A549 (cell line): ENCODE measurements at regions of chr7 and their contacts with region 1.

Region 1: DNA sequence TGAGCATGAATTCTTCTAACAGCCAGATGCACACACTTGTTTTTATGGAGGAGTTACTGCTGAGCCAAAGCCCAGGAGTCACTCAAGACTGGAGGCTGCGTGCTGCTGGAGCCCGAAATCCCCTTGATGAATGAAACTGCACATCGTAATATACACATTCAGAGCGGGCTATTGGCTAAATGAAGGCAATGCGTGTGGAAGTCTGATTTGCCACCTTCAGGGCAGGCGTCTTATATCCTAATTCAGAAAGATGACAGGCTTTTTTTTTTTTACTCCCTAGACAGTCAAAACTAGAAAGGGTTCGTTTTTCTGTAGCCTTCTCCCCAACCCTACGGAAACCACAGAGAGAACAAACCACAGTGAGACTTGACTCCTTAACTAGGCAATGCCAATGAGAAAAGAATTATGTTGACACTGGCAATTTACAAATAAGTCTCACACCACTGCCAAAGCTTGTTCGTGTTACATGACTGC is 227.2 kb upstream of the KLF14 start:
- DNase-seq: peak in 1 of 2 experiments; percentile 82
- ATAC-seq: peak; percentile 69 to 79
- H3K4me3 ChIP-seq: peak overlapping the region; percentile 44
- H3K27ac ChIP-seq: peak overlapping the region; percentile 94 to 96
- H3K4me1 ChIP-seq: peaks cover 76% of the 10 kb centered on the region
- CTCF ChIP-seq: no peak
- EP300 ChIP-seq: no peak
- POLR2A ChIP-seq: 0 out of 2 replicates have a peak, but pooled peaks have one; percentile 18
- RAD21 ChIP-seq: no peak

Region 2: GRCh38 chr7:130822642-130823041 is 138.5 kb before region 1 on chr7:
- CTCF ChIA-PET with region 1: no interaction called
- POLR2A ChIA-PET with region 1: no interaction called
- DNase-seq: no peak
- ATAC-seq: no peak
- H3K4me3 ChIP-seq: no peak overlapping the region
- H3K27ac ChIP-seq: no peak overlapping the region
- H3K4me1 ChIP-seq: no peaks in the 10 kb centered on the region
- CTCF ChIP-seq: no peak
- EP300 ChIP-seq: no peak
- POLR2A ChIP-seq: no peak
- RAD21 ChIP-seq: no peak

Region 3: DNA sequence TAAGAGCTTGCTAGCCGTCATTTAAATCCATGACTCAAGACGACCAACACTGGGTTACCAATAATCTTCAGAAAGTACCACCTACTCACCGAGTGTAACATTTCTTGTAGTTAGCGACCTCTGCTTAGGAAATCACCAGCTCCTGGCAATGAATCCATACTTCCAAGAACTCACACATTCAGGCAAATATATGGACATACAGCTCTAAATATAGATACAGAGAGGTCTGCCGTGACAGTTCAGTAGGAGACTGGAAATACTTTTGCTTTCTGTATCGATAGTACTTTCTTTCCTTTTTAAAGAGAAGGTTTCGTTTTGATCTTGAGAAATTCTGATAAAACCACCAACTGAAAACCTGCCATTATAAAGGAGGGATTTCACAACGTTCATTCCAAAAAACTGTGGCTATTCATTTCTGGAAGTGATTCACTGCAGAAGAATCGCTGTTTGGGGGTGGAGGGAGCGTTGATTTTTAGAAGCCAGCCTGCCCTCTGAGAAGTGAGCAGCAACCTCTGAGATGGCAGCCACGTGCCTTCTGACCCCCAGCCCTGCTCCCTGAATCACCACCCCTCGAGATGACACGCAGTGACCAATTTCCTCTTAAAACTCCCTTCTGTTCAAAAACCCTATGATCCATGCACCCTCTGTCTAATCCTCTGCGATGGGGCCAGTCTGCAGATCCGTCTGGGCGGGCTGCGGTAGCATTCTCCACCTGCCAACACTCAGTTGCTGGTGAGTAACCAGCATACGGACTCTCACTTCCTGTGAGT is 48.1 kb before region 1 on chr7:
- CTCF ChIA-PET with region 1: interaction called, 13 read pairs
- POLR2A ChIA-PET with region 1: interaction called, 14 read pairs
- DNase-seq: peak in 1 of 2 experiments; percentile 91
- ATAC-seq: peak; percentile 75 to 78
- H3K4me3 ChIP-seq: peak overlapping the region; percentile 62
- H3K27ac ChIP-seq: peak overlapping the region; percentile 85 to 93
- H3K4me1 ChIP-seq: peaks cover 61% of the 10 kb centered on the region
- CTCF ChIP-seq: no peak
- EP300 ChIP-seq: peak; percentile 80 to 91; a peak in 4 of 5 replicates
- POLR2A ChIP-seq: peak; percentile 36; the same call in 1 of the 2 replicates
- RAD21 ChIP-seq: peak in 1 of 2 experiments; percentile 34; a peak in 2 of 5 replicates

Region 4: GRCh38 chr7:130929896-130930659 is 31.1 kb before region 1 on chr7:
- CTCF ChIA-PET with region 1: interaction called, 11 read pairs
- POLR2A ChIA-PET with region 1: no interaction called
- DNase-seq: peak in 1 of 2 experiments; percentile 77
- ATAC-seq: peak; percentile 50 to 56
- H3K4me3 ChIP-seq: no peak overlapping the region
- H3K27ac ChIP-seq: peak overlapping the region; percentile 75 to 85
- H3K4me1 ChIP-seq: peaks cover 84% of the 10 kb centered on the region
- CTCF ChIP-seq: no peak
- EP300 ChIP-seq: peak in 1 of 2 experiments; percentile 20; a peak in 1 of 5 replicates
- POLR2A ChIP-seq: no peak
- RAD21 ChIP-seq: no peak

Region 5: DNA sequence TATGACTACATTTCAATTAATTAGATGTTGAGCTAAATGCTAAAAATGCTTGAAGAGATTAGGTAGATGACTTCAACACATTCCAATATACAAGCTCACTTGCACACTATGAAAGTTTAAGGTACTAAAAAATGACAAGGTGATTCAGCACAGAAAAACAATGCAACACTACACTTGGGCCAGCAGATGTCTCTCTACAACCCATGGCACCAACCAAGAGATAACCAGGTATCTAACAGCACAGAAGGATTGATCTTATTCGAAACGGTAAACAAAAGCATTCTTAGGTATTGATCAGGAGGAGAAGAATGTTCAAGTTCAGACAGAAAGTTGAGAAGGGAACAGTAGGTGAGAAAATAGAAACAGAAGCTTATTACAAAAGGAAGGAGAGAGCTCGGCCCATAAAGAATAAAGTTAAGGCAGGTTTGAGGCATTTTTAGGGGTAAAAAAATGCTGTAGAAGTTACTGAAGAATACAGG is 21.0 kb after region 1 on chr7:
- CTCF ChIA-PET with region 1: interaction called, 14 read pairs
- POLR2A ChIA-PET with region 1: no interaction called
- DNase-seq: peak; percentile 43 to 63
- ATAC-seq: peak; percentile 83 to 85
- H3K4me3 ChIP-seq: no peak overlapping the region
- H3K27ac ChIP-seq: peak overlapping the region in 1 of 2 experiments; percentile 45; a peak in 4 of 6 replicates
- H3K4me1 ChIP-seq: peaks cover 41% of the 10 kb centered on the region
- CTCF ChIP-seq: peak; percentile 77
- EP300 ChIP-seq: no peak
- POLR2A ChIP-seq: no peak
- RAD21 ChIP-seq: peak; percentile 63 to 76

Region 6: DNA sequence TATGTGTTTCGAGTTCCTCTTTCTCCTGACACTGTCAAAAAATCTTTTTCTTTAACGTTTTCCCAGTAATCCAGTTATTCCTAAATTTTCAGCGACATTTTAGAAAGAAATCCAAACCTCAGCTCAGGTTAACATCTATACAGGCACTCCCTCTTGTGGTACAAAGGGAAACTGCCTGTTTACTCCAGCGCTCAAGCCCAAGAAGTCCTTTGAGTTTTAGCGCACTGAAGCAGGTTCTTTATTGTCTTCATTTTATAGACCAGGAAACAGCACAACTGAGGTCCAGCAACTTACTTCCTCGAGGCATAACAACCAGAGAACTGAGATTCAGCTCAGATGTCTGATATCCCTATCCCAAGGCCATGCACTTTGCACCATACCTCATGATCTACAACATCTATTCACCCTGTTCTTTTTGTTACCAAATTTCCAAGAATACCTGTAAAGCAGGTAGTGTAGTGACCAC is 79.3 kb after region 1 on chr7:
- CTCF ChIA-PET with region 1: interaction called, 13 read pairs
- POLR2A ChIA-PET with region 1: no interaction called
- DNase-seq: peak; percentile 58 to 79
- ATAC-seq: peak; percentile 82 to 83
- H3K4me3 ChIP-seq: no peak overlapping the region
- H3K27ac ChIP-seq: peak overlapping the region; percentile 15 to 47; a peak in 1 of 6 replicates
- H3K4me1 ChIP-seq: peaks cover 38% of the 10 kb centered on the region
- CTCF ChIP-seq: peak; percentile 92
- EP300 ChIP-seq: no peak
- POLR2A ChIP-seq: no peak
- RAD21 ChIP-seq: peak; percentile 89 to 91